Panc1 (cell line): ENCODE measurements at regions of chr7 and their contacts with region 1.

Region 1: GRCh38 chr7:45157653-45158401 is at the start of gene RAMP3:
- DNase-seq: no peak
- ATAC-seq: no peak
- H3K4me3 ChIP-seq: no peak within 1 kb of the TSS
- H3K27ac ChIP-seq: no peak within 1 kb of the TSS
- H3K4me1 ChIP-seq: no peaks in the 10 kb centered on the region
- H3K27me3 ChIP-seq: peaks cover 4% of the 10 kb centered on the region; the same call in 1 of the 2 replicates
- CTCF ChIP-seq: no peak
- total RNA-seq, gene RAMP3: 0.13 TPM

Region 2: DNA sequence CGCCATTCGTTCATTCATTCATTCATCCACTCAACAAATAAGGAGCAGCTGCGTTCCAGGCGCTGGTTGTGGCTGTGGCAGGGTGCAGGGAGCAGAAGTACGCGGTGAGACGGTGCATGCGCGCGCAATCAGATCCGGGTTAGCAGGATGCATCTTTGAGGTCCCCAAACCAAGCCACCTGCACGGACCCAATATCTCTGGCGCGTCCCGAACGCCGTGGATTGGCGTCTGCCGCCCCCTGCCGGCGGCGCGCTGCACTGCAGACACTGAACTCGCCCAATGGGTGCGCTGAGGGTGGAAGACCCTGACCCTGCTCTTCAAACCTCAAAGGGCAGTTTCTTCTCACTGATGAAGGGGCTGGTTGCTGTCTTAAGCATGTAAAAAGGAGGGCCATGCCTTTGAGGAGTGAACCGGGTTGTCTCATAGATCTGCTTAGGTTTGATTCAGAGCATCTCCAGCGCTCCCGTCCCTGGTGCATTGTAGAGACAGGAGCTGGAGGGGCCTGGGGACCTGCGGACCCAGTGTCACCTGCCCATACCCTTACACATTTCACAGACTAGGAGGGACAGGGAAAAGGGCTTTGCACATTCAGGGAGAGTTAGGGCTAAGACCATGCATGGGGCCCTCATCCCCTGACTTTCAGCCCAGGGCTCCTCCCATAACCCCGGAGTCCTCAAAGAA is 102.3 kb after region 1 on chr7:
- CTCF ChIA-PET with region 1: interaction called, 10 read pairs
- POLR2A ChIA-PET with region 1: no interaction called
- in situ Hi-C with region 1: no loop called
- intact Hi-C with region 1: loop called (anchors 1 kb)
- DNase-seq: peak; percentile 24
- ATAC-seq: peak; percentile 88
- H3K4me3 ChIP-seq: no peak overlapping the region
- H3K27ac ChIP-seq: no peak overlapping the region
- H3K4me1 ChIP-seq: no peaks in the 10 kb centered on the region
- H3K27me3 ChIP-seq: peaks cover 9% of the 10 kb centered on the region; the same call in 1 of the 2 replicates
- CTCF ChIP-seq: peak; percentile 100

Region 3: GRCh38 chr7:45574521-45575500 is 417.0 kb after region 1 on chr7:
- CTCF ChIA-PET with region 1: no interaction called
- POLR2A ChIA-PET with region 1: no interaction called
- in situ Hi-C with region 1: no loop called
- intact Hi-C with region 1: loop called (anchors 10 kb)
- DNase-seq: no peak
- ATAC-seq: peak; percentile 81
- H3K4me3 ChIP-seq: peak overlapping the region; percentile 31 to 33
- H3K27ac ChIP-seq: no peak overlapping the region
- H3K4me1 ChIP-seq: peaks cover 4% of the 10 kb centered on the region
- H3K27me3 ChIP-seq: peaks cover 40% of the 10 kb centered on the region
- CTCF ChIP-seq: peak; percentile 41; the same call in 1 of the 2 replicates